ENCODE measurements at regions of chr14 and their contacts with region 1.

Region 1: DNA sequence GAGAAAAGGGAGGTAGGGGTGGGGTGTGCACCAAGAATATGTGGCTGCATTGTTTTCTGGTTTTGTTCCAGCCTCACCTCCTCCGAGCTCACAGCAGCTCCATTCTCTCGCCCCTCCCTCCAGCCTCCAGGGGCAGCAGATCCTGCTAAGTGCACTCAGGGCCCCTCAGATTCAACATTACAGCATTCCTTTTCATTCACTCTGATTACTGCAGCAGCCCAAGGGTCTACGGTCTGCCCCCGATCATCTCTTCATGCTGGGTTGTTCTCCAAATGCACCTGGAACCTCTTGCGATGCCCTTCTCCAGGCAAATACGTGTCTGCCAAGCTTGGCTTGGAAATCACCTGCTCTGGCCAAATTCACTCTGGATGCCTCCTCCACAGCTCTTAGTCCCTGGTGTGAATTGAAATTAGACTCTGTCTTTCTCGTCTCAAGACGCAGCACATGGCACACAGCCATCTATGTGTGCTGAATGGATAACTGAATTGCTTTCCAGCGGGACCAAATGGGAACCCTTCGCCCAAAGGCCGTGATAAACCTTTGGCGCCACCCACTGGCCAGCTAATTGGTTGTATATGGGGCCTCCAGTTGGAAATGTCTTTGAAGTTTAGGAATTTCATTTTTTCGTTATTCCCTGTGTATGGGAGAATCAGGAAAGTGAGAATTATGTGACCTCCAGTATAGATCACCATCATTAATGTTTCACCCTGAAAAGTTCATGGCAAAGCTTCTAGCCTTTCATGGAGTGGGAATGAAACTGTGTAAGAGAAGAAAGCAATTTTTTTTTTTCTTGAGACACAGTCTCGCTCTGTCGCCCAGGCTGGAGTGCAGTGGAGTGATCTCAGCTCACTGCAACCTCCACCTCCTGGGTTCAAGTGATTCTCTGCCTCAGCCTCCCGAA is 9.6 kb upstream of the HSP90AA1 start:
- DNase-seq: peak; percentile 79
- H3K4me3 ChIP-seq: no peak overlapping the region
- H3K27ac ChIP-seq: no peak overlapping the region
- H3K4me1 ChIP-seq: no peaks in the 10 kb centered on the region
- H3K27me3 ChIP-seq: no peaks in the 10 kb centered on the region
- CTCF ChIP-seq: peak; percentile 81 to 88
- POLR2A ChIP-seq: no peak

Region 2: GRCh38 chr14:102046343-102047278 is 49.9 kb before region 1 on chr14:
- CTCF ChIA-PET with region 1: interaction called, 7 read pairs
- POLR2A ChIA-PET with region 1: no interaction called
- dilution Hi-C with region 1: no loop called
- intact Hi-C with region 1: loop called (anchors 2 kb)
- DNase-seq: peak; percentile 15
- H3K4me3 ChIP-seq: no peak overlapping the region
- H3K27ac ChIP-seq: no peak overlapping the region
- H3K4me1 ChIP-seq: no peaks in the 10 kb centered on the region
- H3K27me3 ChIP-seq: no peaks in the 10 kb centered on the region
- CTCF ChIP-seq: no peak
- POLR2A ChIP-seq: no peak

Region 3: DNA sequence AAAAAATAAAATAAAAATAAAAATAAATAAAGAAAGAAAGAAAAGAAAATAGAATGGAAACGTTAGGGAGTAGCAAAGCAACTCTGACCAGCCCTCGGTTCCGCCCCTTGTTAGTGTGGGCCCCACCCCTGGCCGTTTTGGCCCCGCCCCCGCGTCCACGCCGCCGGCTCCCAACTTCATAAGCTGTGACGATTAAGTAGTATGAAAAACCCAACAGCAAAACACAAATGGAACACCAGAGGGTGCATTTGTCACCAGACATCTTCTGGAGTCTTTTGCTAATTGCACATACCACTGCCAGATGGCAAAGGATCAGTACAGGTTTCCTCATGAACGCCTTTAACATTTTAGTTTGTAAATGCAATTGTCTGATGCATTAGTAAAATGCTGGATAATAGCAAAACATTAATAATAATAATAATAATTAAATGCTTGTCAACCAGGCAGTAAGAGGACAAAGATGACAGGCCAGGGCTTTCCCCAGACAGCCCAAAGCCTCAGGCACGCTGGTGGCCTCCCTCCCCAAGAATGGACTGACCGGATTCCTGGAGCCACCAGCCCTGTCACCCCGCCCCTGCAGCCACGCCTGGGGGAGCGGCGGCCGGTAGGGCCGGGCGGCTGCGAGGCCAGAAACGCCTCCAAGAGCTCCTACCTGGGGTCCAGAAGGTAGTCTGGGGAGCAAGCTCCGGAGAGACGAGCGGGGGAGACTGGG is 33.2 kb before region 1 on chr14:
- CTCF ChIA-PET with region 1: interaction called, 87 read pairs
- POLR2A ChIA-PET with region 1: interaction called, 3 read pairs
- dilution Hi-C with region 1: no loop called
- intact Hi-C with region 1: loop called (anchors 1 kb)
- DNase-seq: peak; percentile 94
- H3K4me3 ChIP-seq: no peak overlapping the region
- H3K27ac ChIP-seq: no peak overlapping the region
- H3K4me1 ChIP-seq: no peaks in the 10 kb centered on the region
- H3K27me3 ChIP-seq: no peaks in the 10 kb centered on the region
- CTCF ChIP-seq: peak; percentile 32 to 53
- POLR2A ChIP-seq: no peak

Region 4: DNA sequence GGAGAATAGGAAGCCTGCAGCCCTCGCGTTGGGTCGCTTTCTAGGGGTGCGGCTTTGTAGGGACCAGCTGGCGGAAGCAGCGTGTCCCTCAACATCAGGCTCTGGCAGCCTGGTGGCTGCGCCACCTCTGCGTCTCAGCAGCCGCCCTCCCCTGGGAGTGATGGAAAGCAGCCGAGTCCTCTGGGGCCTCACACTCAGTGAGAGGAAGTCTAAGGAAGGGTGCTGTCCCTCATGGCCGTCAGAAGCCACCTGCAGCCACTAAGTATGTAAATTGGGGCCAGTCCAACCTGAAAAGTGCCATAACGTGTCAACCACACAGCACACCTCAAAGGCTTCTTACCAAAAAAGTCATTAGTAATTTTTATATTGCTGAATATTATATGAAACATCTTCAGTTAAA is 123.6 kb after region 1 on chr14:
- CTCF ChIA-PET with region 1: no interaction called
- POLR2A ChIA-PET with region 1: no interaction called
- dilution Hi-C with region 1: no loop called
- intact Hi-C with region 1: no loop called
- DNase-seq: no peak
- H3K4me3 ChIP-seq: no peak overlapping the region
- H3K27ac ChIP-seq: no peak overlapping the region
- H3K4me1 ChIP-seq: peaks cover 8% of the 10 kb centered on the region
- H3K27me3 ChIP-seq: no peaks in the 10 kb centered on the region
- CTCF ChIP-seq: no peak
- POLR2A ChIP-seq: no peak

Measured in endothelial cell of umbilical vein (primary cell).